ENCODE measurements at regions of chr15 and their contacts with region 1.

Region 1: GRCh38 chr15:25497934-25498333 is 59.1 kb upstream of the UBE3A start:
- DNase-seq: no peak
- ATAC-seq: no peak

Region 2: GRCh38 chr15:25136119-25136518 is 361.8 kb before region 1 on chr15:
- intact Hi-C with region 1: loop called in 1 of 2 experiments (anchors 10 kb)
- DNase-seq: no peak
- ATAC-seq: no peak

Region 3: GRCh38 chr15:25426896-25427610 is 70.9 kb before region 1 on chr15:
- intact Hi-C with region 1: no loop called
- DNase-seq: no peak
- ATAC-seq: no peak

Region 4: DNA sequence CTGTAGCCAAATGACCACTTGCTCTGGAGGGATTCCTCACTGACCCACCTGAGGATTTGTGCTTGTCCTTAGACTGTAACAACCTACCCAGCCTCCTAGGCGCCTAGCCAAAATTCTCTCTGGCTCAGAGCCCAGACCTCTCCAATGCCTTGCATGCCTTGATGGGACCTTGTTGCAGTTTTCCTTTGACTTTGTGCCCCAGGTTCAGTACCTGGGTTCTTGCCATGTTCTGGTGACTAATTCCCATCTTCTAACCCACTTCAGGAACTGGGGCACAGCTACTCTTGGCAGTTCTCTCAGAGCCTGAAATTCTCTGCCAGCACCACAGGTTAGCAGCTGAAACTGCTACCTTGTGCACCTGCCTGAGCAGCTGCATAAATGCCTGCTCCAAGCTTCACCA is 32.1 kb before region 1 on chr15:
- intact Hi-C with region 1: no loop called
- DNase-seq: no peak
- ATAC-seq: no peak